AG04449 (cell line): ENCODE measurements at regions of chr10 and their contacts with region 1.

Region 1: GRCh38 chr10:114304017-114304570 is 65.0 kb downstream of the VWA2 start:
- DNase-seq: peak; percentile 67
- H3K4me3 ChIP-seq: peak overlapping the region; percentile 45
- CTCF ChIP-seq: peak; percentile 82

Region 2: GRCh38 chr10:114285961-114286441 is 18.1 kb before region 1 on chr10:
- CTCF ChIA-PET with region 1: interaction called, 40 read pairs
- POLR2A ChIA-PET with region 1: interaction called, 4 read pairs
- DNase-seq: no peak
- H3K4me3 ChIP-seq: no peak overlapping the region
- CTCF ChIP-seq: no peak

Region 3: DNA sequence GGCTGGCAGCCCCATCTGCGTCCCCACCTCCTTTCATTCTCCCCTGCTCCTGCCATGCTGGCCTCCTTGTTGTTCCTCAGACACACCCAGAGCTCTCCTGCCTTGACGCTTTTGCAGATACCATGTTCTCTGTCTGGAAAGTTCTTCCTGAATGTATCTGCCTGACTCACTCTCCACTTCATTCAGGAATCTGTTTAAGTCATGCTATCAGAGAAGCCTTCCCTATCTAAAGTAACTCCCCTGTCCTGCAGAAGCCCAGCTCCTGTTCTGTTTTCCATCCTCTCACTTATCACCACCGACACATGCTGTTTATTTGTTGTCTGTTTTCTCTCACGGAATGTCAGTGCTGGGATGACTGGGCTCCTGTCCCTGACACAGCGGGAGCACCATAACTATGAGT is 18.2 kb after region 1 on chr10:
- CTCF ChIA-PET with region 1: interaction called, 11 read pairs
- POLR2A ChIA-PET with region 1: no interaction called
- DNase-seq: no peak
- H3K4me3 ChIP-seq: no peak overlapping the region
- CTCF ChIP-seq: no peak

Region 4: GRCh38 chr10:114367041-114367818 is 63.1 kb after region 1 on chr10:
- CTCF ChIA-PET with region 1: no interaction called
- POLR2A ChIA-PET with region 1: no interaction called
- DNase-seq: no peak
- H3K4me3 ChIP-seq: no peak overlapping the region
- CTCF ChIP-seq: no peak

Region 5: DNA sequence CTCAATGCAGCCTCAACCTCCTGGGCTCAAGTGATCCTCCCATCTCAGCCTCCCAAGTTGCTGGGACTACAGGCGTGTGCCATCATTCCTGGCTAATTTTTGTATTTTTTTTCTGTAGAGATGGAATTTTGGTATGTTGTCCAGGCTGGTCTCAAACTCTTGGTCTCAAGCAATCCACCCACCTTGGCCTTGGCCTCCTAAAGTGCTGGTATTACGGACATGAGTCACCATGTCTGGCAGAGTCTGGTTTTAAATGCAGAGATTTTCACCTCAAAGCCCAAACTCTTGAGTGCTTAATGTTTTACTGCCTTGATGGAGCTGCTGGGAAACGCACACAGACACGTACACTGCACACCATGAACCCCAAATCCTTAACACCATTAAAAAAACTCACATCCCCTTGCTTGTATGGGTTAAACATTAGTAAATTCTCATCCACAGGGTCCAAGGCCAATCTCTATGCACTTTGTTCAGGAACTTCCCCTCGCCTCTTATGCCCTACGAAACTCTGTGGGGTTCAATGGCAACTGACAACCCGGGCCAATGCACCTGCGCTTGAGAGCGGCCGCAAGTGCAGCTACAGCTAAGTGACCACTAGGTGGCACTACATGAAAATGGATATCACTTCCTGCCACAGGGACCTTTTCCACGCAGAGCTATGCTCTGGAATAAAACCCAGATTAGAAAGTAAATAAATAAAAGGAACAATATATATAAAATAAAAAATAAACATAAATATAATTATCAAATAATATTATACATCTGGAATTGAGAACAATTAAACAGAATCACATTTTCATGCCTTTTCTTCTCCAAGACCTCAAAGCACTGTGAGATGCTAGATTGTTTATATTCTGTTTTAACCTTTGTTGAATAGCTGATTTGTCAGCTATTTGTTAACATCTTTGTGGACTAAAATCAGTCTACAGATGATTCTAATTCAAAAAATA is 167.1 kb after region 1 on chr10:
- CTCF ChIA-PET with region 1: interaction called, 18 read pairs
- POLR2A ChIA-PET with region 1: no interaction called
- DNase-seq: peak; percentile 9
- H3K4me3 ChIP-seq: no peak overlapping the region
- CTCF ChIP-seq: peak; percentile 81

Region 6: DNA sequence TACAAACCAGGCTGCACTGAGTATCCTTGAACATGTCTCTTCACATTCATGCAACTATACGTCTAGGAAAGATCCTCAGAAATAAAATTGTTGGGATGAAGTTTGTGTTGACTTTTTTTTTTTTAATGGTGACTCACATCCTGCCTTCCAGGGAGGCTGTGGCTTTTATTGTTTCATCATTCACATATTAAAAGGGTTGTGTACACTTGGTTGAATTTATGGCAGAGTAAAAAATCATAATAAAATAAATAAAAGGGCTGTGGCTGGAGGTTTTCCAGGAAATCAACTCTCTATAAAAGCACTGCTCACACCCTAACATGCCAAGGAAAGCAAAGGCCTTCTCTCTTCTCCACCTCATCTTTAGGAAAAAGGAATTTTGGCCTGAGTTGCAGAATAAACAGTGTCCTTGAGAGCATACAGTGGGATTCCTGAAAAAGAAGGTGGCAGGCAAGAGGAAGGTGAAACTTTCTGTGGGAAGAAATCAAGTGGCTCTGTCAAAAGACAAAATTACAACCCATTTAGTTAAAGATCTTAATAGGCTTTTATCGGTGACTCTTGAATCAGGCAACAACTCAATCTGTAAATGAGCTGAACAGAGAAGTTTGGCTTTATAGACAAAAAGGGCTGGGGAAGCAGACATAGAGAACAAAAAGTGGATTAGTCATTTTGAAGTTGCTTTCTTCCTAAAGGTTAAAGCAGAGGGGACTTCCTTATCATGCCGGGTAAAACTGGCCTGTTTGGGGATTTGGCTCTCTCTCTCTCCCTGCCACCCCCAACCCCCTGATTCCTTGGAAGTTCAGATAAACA is 475.9 kb after region 1 on chr10:
- CTCF ChIA-PET with region 1: interaction called, 20 read pairs
- POLR2A ChIA-PET with region 1: no interaction called
- DNase-seq: peak; percentile 67
- H3K4me3 ChIP-seq: no peak overlapping the region
- CTCF ChIP-seq: no peak